Breast epithelium (tissue), 4 donors: ENCODE measurements at regions of chr1 and their contacts with region 1.

Region 1: GRCh38 chr1:199163670-199164069 is 524.8 kb downstream of the PTPRC start:
- DNase-seq: no peak
- H3K4me3 ChIP-seq: no peak overlapping the region
- H3K27ac ChIP-seq: no peak overlapping the region
- H3K4me1 ChIP-seq: no peaks in the 10 kb centered on the region
- H3K27me3 ChIP-seq: no peaks in the 10 kb centered on the region
- CTCF ChIP-seq: no peak
- POLR2A ChIP-seq: no peak

Region 2: DNA sequence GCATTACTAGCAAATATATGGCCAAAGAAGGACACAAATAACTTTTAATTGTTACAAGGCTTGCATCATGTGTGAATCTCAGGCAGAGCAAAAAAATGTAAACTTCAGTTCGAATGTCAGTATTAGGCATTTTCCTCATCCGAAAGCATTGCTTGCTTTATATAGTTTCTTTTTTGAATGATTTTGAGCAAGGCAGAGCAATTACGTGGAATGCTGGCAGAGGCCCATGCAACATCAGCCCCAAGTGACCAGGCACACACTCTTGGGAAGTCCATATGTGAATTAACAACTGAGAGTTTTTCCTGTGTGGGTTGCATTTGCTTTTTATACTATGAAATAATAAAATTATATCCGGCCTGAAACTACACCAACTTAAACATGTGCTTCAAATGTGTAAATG is 250.0 kb before region 1 on chr1:
- intact Hi-C with region 1: no loop called
- DNase-seq: no peak
- H3K4me3 ChIP-seq: no peak overlapping the region
- H3K27ac ChIP-seq: no peak overlapping the region
- H3K4me1 ChIP-seq: no peaks in the 10 kb centered on the region
- H3K27me3 ChIP-seq: no peaks in the 10 kb centered on the region
- CTCF ChIP-seq: no peak
- POLR2A ChIP-seq: no peak

Region 3: GRCh38 chr1:199123615-199124014 is 40.1 kb before region 1 on chr1:
- intact Hi-C with region 1: no loop called
- DNase-seq: no peak
- H3K4me3 ChIP-seq: no peak overlapping the region
- H3K27ac ChIP-seq: no peak overlapping the region
- H3K4me1 ChIP-seq: no peaks in the 10 kb centered on the region
- H3K27me3 ChIP-seq: no peaks in the 10 kb centered on the region
- CTCF ChIP-seq: no peak
- POLR2A ChIP-seq: no peak

Region 4: GRCh38 chr1:199551967-199552565 is 388.4 kb after region 1 on chr1:
- intact Hi-C with region 1: no loop called
- DNase-seq: no peak
- H3K4me3 ChIP-seq: no peak overlapping the region
- H3K27ac ChIP-seq: no peak overlapping the region
- H3K4me1 ChIP-seq: no peaks in the 10 kb centered on the region
- H3K27me3 ChIP-seq: no peaks in the 10 kb centered on the region
- CTCF ChIP-seq: peak in 2 of 3 donors; percentile 29 to 38
- POLR2A ChIP-seq: no peak

Region 5: DNA sequence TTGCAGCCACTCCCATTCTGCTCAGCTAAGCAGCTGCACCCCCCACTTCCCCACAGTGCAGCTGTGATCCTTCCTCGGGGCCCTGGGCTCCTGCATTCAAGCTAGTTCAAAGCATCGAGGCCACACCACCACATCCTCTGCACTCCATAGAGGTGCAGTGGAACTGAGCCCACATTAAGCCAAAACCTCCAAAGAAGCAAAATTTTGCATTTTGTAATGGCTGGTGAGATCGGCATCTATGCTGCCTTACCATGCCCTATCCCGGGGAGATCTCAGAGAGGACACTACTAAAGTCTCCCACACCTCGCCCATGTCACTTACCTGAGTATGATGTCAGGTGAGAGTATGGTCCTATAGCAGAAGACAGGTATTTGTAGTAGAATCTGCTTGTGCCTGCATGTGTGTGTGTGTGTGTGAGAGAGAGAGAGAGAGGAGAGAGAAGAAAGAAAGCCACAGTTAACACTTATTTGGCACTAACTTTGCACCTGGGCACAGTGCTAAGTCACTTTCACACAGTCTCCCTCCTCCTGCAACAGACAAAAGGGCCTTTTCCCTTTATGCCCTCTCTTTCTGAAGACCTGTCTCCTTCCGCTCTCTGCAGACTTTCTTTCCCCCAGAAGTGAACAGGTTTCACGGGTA is 1367.1 kb after region 1 on chr1:
- intact Hi-C with region 1: loop called (anchors 10 kb)
- DNase-seq: no peak
- H3K4me3 ChIP-seq: no peak overlapping the region
- H3K27ac ChIP-seq: no peak overlapping the region
- H3K4me1 ChIP-seq: no peaks in the 10 kb centered on the region
- H3K27me3 ChIP-seq: no peaks in the 10 kb centered on the region
- CTCF ChIP-seq: no peak
- POLR2A ChIP-seq: no peak